Mammary epithelial cell (primary cell): ENCODE measurements at regions of chr9 and their contacts with region 1.

Region 1: DNA sequence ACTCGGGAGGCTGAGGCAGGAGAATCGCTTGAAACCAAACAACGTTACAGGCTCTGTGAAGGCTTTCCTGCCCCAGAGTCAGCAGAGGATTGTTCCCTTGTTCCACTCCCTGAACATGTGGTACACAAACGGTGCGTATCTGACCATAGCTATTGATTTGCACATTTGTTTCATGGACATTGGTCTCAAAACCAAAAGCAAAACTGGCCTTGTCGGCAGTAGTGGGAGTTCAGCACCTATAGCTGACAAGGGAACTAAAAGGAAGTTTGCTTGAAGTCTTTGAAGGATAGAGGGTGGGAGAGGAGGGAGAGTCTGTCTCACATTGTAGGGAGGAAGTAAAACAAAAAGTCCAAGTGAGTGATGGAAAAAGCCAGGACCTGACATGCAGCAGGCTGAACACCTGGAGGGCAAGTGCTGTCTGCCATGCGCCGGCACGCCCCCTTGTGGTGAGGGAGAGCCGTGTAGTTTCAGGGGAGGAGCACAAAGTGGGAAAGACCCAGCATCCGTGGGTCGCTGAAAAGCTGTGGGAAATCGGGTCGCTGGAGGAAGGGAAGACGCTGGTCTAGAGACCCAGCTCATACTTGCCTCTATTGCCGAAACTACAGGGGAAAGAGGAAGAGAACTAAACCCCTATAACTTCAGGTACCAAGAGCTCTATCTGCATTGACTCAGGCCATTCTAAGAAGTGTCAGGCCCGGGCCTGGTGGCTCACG is 58.0 kb downstream of the RAD23B start:
- DNase-seq: peak; percentile 75
- H3K4me3 ChIP-seq: no peak overlapping the region
- H3K27ac ChIP-seq: no peak overlapping the region
- H3K4me1 ChIP-seq: peaks cover 25% of the 10 kb centered on the region
- H3K27me3 ChIP-seq: no peaks in the 10 kb centered on the region
- CTCF ChIP-seq: peak; percentile 96

Region 2: DNA sequence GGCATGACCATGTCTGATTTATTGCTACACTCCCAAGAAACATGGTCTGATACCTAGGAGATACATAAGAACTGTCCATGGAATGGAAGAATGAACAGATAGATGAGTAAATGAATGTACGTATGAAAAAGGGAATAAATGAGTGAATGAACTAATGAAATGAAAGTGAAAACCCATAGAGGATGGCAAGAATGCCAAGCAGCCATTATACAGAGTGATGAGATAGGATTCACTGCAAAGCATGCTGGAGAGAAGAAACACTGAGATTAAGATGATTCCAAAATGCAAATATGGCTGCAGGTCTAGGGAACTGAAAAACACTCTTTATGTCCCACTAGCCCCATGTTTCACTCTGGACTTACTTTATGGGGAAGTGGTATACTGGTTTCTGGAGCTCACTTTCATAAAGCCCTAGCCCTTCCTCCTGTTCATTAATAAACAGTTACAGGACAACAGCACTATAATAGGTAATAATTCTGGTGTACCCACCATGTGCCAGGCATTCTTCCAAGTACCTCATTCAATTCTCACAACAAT is 228.3 kb before region 1 on chr9:
- CTCF ChIA-PET with region 1: no interaction called
- dilution Hi-C with region 1: no loop called
- in situ Hi-C with region 1: no loop called
- intact Hi-C with region 1: no loop called
- DNase-seq: no peak
- H3K4me3 ChIP-seq: no peak overlapping the region
- H3K27ac ChIP-seq: no peak overlapping the region
- H3K4me1 ChIP-seq: no peaks in the 10 kb centered on the region
- H3K27me3 ChIP-seq: peaks cover 3% of the 10 kb centered on the region
- CTCF ChIP-seq: no peak

Region 3: DNA sequence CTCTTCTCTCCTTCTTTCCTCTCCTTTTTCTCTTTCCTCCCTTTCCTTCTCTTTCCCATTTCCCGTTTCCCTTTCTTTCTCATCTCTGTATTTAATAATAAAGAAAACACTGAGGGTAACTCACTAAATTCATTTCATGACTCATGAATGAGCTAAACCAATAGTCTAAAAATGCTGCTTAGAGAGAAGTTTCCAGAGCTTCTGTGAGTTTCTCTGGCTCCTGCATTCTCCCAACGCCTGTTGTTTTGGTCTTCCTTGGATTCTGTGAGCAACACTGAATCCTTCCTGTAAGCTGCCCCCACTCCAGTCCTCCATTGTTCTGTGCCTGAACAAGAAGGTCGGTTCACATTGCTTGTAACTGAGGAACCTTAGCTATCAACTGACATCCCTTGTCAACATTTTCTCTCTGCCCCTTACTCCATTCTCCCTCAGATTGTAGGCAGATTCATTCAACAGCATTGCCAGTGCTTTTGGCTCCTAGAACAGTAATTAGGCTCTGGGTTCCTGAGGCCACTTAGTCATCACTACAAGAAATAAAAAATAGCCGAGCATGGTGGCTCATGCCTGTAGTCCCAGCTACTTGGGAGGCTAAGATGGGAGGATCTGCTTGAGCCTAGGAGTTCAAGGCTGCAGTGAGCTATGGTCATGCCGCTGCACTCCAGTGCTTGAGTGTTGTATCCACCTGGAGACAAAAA is 386.2 kb after region 1 on chr9:
- CTCF ChIA-PET with region 1: no interaction called
- dilution Hi-C with region 1: loop called (anchors 10 kb)
- in situ Hi-C with region 1: no loop called
- intact Hi-C with region 1: no loop called
- DNase-seq: no peak
- H3K4me3 ChIP-seq: no peak overlapping the region
- H3K27ac ChIP-seq: no peak overlapping the region
- H3K4me1 ChIP-seq: no peaks in the 10 kb centered on the region
- H3K27me3 ChIP-seq: no peaks in the 10 kb centered on the region
- CTCF ChIP-seq: no peak